CD4-positive, alpha-beta T cell (primary cell): ENCODE measurements at regions of chr2 and their contacts with region 1.

Region 1: GRCh38 chr2:109213646-109214417 is 84.8 kb downstream of the SH3RF3 start:
- DNase-seq: peak; percentile 15 to 88 (median 42)
- ATAC-seq: peak; percentile 82
- H3K4me3 ChIP-seq: no peak overlapping the region
- H3K4me3 Mint-ChIP-seq: peak overlapping the region; percentile 75
- H3K27ac ChIP-seq: no peak overlapping the region
- H3K27ac Mint-ChIP-seq: peak overlapping the region; percentile 69
- H3K4me1 ChIP-seq: peaks cover 63% of the 10 kb centered on the region
- H3K4me1 Mint-ChIP-seq: peaks cover 73% of the 10 kb centered on the region
- H3K27me3 ChIP-seq: peaks cover 44 to 61% of the 10 kb centered on the region in 2 experiments
- H3K27me3 Mint-ChIP-seq: peaks cover 89% of the 10 kb centered on the region
- CTCF ChIP-seq: no peak

Region 2: GRCh38 chr2:109020217-109020637 is 193.6 kb before region 1 on chr2:
- CTCF ChIA-PET with region 1: no interaction called
- POLR2A ChIA-PET with region 1: no interaction called
- intact Hi-C with region 1: loop called in 1 of 2 experiments (anchors 10 kb)
- DNase-seq: peak in 4 of 14 experiments; percentile 19 to 49 (median 46)
- ATAC-seq: peak; percentile 96
- H3K4me3 ChIP-seq: no peak overlapping the region
- H3K4me3 Mint-ChIP-seq: no peak overlapping the region
- H3K27ac ChIP-seq: no peak overlapping the region
- H3K27ac Mint-ChIP-seq: peak overlapping the region; percentile 7
- H3K4me1 ChIP-seq: peaks cover 15% of the 10 kb centered on the region
- H3K4me1 Mint-ChIP-seq: peaks cover 40% of the 10 kb centered on the region
- H3K27me3 ChIP-seq: no peaks in the 10 kb centered on the region
- H3K27me3 Mint-ChIP-seq: no peaks in the 10 kb centered on the region
- CTCF ChIP-seq: no peak

Region 3: GRCh38 chr2:109143214-109144187 is 70.3 kb before region 1 on chr2:
- CTCF ChIA-PET with region 1: no interaction called
- POLR2A ChIA-PET with region 1: interaction called, 3 read pairs
- intact Hi-C with region 1: loop called (anchors 1 to 5 kb)
- DNase-seq: peak; percentile 25 to 83 (median 55)
- ATAC-seq: peak; percentile 78
- H3K4me3 ChIP-seq: peak overlapping the region; percentile 14
- H3K4me3 Mint-ChIP-seq: peak overlapping the region; percentile 53
- H3K27ac ChIP-seq: no peak overlapping the region
- H3K27ac Mint-ChIP-seq: peak overlapping the region; percentile 81
- H3K4me1 ChIP-seq: peaks cover 24% of the 10 kb centered on the region
- H3K4me1 Mint-ChIP-seq: peaks cover 52% of the 10 kb centered on the region
- H3K27me3 ChIP-seq: no peaks in the 10 kb centered on the region
- H3K27me3 Mint-ChIP-seq: no peaks in the 10 kb centered on the region
- CTCF ChIP-seq: no peak

Region 4: GRCh38 chr2:109173311-109174171 is 40.3 kb before region 1 on chr2:
- CTCF ChIA-PET with region 1: no interaction called
- POLR2A ChIA-PET with region 1: no interaction called
- intact Hi-C with region 1: loop called in 1 of 2 experiments (anchors 5 kb)
- DNase-seq: no peak
- ATAC-seq: peak; percentile 27
- H3K4me3 ChIP-seq: no peak overlapping the region
- H3K4me3 Mint-ChIP-seq: no peak overlapping the region
- H3K27ac ChIP-seq: no peak overlapping the region
- H3K27ac Mint-ChIP-seq: peak overlapping the region; percentile 72
- H3K4me1 ChIP-seq: peaks cover 8% of the 10 kb centered on the region
- H3K4me1 Mint-ChIP-seq: peaks cover 33% of the 10 kb centered on the region
- H3K27me3 ChIP-seq: peaks cover 0 to 4% of the 10 kb centered on the region in 2 experiments
- H3K27me3 Mint-ChIP-seq: no peaks in the 10 kb centered on the region
- CTCF ChIP-seq: no peak

Region 5: GRCh38 chr2:109348671-109349550 is 135.1 kb after region 1 on chr2:
- CTCF ChIA-PET with region 1: no interaction called
- POLR2A ChIA-PET with region 1: interaction called, 8 read pairs
- intact Hi-C with region 1: loop called in 1 of 2 experiments (anchors 5 kb)
- DNase-seq: peak; percentile 36 to 79 (median 56)
- ATAC-seq: peak; percentile 99
- H3K4me3 ChIP-seq: peak overlapping the region; percentile 19
- H3K4me3 Mint-ChIP-seq: peak overlapping the region; percentile 28
- H3K27ac ChIP-seq: peak overlapping the region; percentile 64 to 69
- H3K27ac Mint-ChIP-seq: peak overlapping the region; percentile 87
- H3K4me1 ChIP-seq: peaks cover 44% of the 10 kb centered on the region
- H3K4me1 Mint-ChIP-seq: peaks cover 50% of the 10 kb centered on the region
- H3K27me3 ChIP-seq: no peaks in the 10 kb centered on the region
- H3K27me3 Mint-ChIP-seq: no peaks in the 10 kb centered on the region
- CTCF ChIP-seq: no peak